ENCODE measurements at regions of chr3 and their contacts with region 1.

Region 1: GRCh38 chr3:120742198-120742849 is at the starts of genes GTF2E1 and RABL3:
- DNase-seq: peak; percentile 96 to 100 (median 99)
- H3K4me3 ChIP-seq: peak within 1 kb of the TSS; percentile 70 to 99 (median 91)
- H3K27ac ChIP-seq: peak within 1 kb of the TSS; percentile 82 to 100 (median 97)
- H3K27me3 ChIP-seq: no peaks in the 10 kb centered on the region
- CTCF ChIP-seq: peak in 16 of 56 donors; percentile 4 to 41 (median 18)
- total RNA-seq, gene GTF2E1: 6.9 to 20.8 (median 13.6) TPM
- total RNA-seq, gene RABL3: 14.9 to 33.8 (median 25.1) TPM

Region 2: DNA sequence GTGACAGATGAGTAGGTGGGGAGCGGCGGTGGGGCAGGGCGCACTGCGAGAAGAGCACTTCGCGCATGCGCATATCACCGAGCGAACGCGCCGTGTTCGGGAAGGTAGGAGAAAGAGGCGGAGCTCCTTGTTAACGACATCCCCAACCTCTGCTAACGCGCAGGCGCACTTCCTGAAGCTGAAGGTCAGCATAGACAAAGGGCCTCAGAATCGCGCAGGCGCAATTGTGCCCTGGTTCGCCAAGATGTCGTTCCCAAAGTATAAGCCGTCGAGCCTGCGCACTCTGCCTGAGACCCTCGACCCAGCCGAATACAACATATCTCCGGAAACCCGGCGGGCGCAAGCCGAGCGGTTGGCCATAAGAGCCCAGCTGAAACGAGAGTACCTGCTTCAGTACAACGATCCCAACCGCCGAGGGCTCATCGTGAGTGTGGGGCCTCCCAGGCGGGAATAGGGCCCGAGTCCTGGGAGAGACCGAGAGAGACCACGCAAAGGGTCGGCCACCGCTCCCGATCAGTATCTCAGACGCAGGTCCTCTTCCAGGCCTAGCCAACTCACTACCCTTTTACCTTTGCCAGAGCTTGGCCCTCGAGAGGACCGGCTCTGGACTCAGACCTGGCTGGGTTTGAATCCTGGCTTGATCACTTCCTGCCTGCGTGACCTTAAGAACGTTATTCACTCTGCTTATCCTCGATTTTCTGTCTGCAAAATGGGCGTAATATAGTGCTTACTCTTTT is 146.0 kb before region 1 on chr3 and contains the start of gene NDUFB4:
- intact Hi-C with region 1: loop called (anchors 2 to 10 kb)
- DNase-seq: peak; percentile 94 to 98 (median 96)
- H3K4me3 ChIP-seq: peak within 1 kb of the TSS; percentile 61 to 100 (median 91)
- H3K27ac ChIP-seq: peak within 1 kb of the TSS; percentile 70 to 97 (median 93)
- H3K27me3 ChIP-seq: no peaks in the 10 kb centered on the region
- CTCF ChIP-seq: peak in 22 of 56 donors; percentile 8 to 53 (median 24)
- total RNA-seq, gene NDUFB4: 75.5 to 170 (median 127) TPM

Measured in dorsolateral prefrontal cortex (tissue), 120 donors.